ENCODE measurements at regions of chr19 and their contacts with region 1.

Region 1: DNA sequence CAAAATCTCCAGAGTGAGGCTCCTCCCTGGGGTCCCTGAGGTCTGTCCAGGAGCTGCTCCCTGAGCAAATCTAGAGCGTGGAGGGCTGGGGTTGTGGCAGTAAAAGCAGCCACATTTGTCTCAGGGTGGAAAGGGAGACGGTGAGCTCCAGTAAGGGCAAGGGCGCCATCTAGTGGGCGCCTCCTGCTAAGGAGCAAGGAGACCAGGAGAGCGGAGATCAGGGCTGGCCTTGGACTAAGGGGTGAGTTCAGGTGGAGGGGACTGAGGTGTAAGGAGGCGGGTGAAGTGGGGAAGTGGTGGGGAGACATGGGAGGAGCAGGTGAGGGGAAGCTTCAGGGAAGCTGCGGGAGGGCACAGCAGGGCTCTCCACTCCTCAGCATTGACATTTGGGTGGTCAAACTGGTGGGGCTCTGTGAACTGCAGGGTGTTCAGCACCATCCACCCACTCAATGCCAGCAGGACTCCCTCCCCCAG is 5.3 kb upstream of the CEACAM21 start:
- DNase-seq: peak; percentile 82

Region 2: DNA sequence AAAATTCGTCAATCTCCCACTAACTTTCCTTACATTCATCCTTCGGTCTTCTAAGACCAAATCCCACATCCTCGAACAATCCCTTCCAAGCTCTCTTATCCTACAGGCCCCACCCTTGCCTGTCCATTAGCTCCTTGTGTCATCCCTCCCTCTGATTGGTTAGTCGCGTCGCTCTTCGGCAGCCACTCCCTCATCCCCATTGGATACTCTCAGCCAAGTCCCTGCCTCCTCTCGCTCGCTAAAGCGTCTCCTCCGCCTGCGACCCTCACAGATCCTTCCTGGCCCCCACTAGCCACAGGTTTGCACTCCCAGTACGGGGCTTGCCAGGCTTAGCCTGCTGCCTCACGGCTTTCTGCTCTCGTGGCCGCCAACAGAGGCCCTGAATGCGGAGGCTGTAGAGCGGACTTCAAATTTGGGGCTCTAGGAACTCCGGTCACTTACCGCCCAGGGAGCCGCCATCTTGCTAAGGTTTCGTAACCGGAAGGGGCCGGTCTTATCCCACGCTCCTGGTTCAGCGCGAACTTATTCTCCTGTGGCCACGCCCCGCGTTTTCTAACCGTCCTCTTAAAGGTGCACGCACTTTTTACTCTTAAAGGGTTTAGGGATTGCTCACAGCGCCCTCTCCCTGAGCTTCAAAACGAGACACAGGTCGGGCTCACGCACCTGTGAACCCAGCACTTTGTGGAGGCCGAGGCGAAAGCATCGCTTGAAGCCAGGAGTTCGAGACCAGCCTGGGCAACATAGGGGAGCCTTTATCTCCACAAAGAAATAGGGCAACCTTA is 131.0 kb before region 1 on chr19 and contains the start of gene DMAC2:
- CTCF ChIA-PET with region 1: interaction called, 5 read pairs
- POLR2A ChIA-PET with region 1: interaction called, 12 read pairs
- DNase-seq: peak; percentile 95

Region 3: DNA sequence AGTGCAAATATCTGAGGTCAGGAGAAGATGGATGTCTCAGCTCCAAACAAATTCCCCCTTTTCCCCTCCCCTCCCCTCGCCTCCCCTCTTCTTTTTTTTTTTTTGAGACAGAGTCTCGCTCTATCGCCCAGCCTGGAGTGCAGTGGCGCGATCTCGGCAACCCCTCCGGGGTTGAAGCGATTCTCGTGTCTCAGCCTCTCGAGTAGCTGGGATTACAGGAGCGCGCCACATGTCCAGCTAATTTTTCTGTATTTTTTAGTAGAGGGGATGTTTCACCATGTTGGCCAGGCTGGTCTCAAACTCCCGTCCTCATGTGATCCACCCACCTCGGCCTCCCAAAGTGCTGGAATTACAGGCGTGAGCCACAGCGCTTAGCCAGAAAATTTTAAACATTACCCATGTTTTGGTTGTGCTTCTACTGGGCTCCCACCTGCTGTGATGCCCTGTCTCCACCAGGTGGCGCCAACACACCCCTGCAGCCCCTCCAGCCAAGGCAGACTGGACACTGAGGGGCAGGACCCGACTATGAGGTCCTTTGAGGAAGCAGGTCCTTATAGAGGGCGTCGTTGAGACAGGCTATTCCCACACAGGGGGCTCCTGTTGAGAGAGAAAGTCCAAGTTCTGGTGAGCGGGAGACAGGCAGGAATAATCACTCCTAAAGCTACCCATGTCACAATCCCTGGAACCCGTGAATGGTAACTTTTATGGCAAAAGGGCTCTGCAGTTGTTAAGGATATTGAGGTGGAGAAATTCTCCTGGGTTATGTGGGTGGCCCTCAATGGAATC is 121.4 kb before region 1 on chr19:
- CTCF ChIA-PET with region 1: interaction called, 12 read pairs
- POLR2A ChIA-PET with region 1: no interaction called
- DNase-seq: peak; percentile 87

Measured in HEK293T (cell line).